Activated B cell treated with CpG ODN at 0.5 μM for 24 hours (primary cell): ENCODE measurements at regions of chr14 and their contacts with region 1.

Region 1: GRCh38 chr14:54773171-54773975 is 129.3 kb downstream of the GCH1 start:
- DNase-seq: no peak
- ATAC-seq: peak; percentile 32
- H3K4me3 Mint-ChIP-seq: peak overlapping the region; percentile 32
- H3K27ac Mint-ChIP-seq: peak overlapping the region; percentile 62
- H3K4me1 Mint-ChIP-seq: peaks cover 50% of the 10 kb centered on the region
- H3K27me3 Mint-ChIP-seq: no peaks in the 10 kb centered on the region
- CTCF ChIP-seq: no peak

Region 2: GRCh38 chr14:54366736-54367735 is 406.3 kb before region 1 on chr14:
- CTCF ChIA-PET with region 1: no interaction called
- POLR2A ChIA-PET with region 1: no interaction called
- intact Hi-C with region 1: loop called (anchors 5 kb)
- DNase-seq: no peak
- ATAC-seq: peak; percentile 65
- H3K4me3 Mint-ChIP-seq: no peak overlapping the region
- H3K27ac Mint-ChIP-seq: no peak overlapping the region
- H3K4me1 Mint-ChIP-seq: no peaks in the 10 kb centered on the region
- H3K27me3 Mint-ChIP-seq: peaks cover 15% of the 10 kb centered on the region
- CTCF ChIP-seq: no peak

Region 3: GRCh38 chr14:54509546-54510501 is 263.5 kb before region 1 on chr14 and contains the start of gene CGRRF1:
- CTCF ChIA-PET with region 1: interaction called, 13 read pairs
- POLR2A ChIA-PET with region 1: interaction called, 5 read pairs
- intact Hi-C with region 1: loop called (anchors 1 kb)
- DNase-seq: peak; percentile 98
- ATAC-seq: peak; percentile 98
- H3K4me3 Mint-ChIP-seq: peak within 1 kb of the TSS; percentile 95
- H3K27ac Mint-ChIP-seq: peak within 1 kb of the TSS; percentile 89
- H3K4me1 Mint-ChIP-seq: peaks cover 41% of the 10 kb centered on the region
- H3K27me3 Mint-ChIP-seq: no peaks in the 10 kb centered on the region
- CTCF ChIP-seq: no peak
- total RNA-seq, gene CGRRF1: 11.9 and 14.1 TPM in 2 replicates

Region 4: GRCh38 chr14:54642801-54643697 is 130.3 kb before region 1 on chr14:
- CTCF ChIA-PET with region 1: interaction called, 4 read pairs
- POLR2A ChIA-PET with region 1: no interaction called
- intact Hi-C with region 1: loop called (anchors 1 kb)
- DNase-seq: no peak
- ATAC-seq: no peak
- H3K4me3 Mint-ChIP-seq: no peak overlapping the region
- H3K27ac Mint-ChIP-seq: no peak overlapping the region
- H3K4me1 Mint-ChIP-seq: no peaks in the 10 kb centered on the region
- H3K27me3 Mint-ChIP-seq: no peaks in the 10 kb centered on the region
- CTCF ChIP-seq: no peak

Region 5: DNA sequence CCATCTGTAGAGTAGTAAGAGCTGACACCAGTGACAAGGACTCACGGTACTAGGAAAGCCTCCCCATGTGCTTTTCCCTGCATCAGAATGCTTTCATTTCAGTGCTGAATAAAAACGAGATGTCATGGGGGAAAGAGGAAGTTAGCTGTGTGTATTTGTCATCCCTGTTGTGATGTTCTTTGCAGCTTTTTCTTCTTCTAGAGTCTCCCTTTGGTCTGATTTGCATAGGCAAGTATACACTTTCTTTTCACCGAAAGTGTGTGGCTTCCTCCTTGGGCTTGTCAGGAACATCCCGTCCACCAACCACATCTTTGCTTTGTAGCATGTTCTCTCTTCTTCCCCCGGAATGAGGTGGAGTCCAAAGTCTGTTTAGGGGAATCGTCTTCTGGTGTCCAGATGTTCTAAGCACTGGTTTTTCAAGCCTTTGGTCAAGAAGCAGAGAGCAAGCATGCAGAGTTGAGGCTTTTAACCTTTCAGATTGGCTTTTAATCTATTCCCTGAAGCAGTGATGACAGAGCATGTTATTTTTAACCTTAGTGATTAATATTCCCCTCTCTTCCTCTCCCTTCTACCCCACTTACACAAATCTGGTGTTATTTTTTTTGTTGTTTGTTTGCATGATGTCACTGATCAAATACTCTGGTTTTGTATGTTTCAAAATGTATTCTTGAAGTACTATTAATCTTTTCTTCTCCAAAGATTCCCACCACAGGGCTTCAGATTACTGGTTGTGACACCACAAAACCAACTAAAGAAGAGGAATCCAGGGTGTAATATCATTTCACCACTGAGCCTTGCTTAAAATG is 43.0 kb before region 1 on chr14:
- CTCF ChIA-PET with region 1: interaction called, 7 read pairs
- POLR2A ChIA-PET with region 1: interaction called, 4 read pairs
- intact Hi-C with region 1: loop called (anchors 1 kb)
- DNase-seq: no peak
- ATAC-seq: peak; percentile 90
- H3K4me3 Mint-ChIP-seq: peak overlapping the region; percentile 78
- H3K27ac Mint-ChIP-seq: peak overlapping the region; percentile 88
- H3K4me1 Mint-ChIP-seq: peaks cover 22% of the 10 kb centered on the region
- H3K27me3 Mint-ChIP-seq: no peaks in the 10 kb centered on the region
- CTCF ChIP-seq: no peak

Region 6: GRCh38 chr14:54839701-54840119 is 66.3 kb after region 1 on chr14:
- CTCF ChIA-PET with region 1: no interaction called
- POLR2A ChIA-PET with region 1: interaction called, 12 read pairs
- intact Hi-C with region 1: no loop called
- DNase-seq: no peak
- ATAC-seq: no peak
- H3K4me3 Mint-ChIP-seq: no peak overlapping the region
- H3K27ac Mint-ChIP-seq: no peak overlapping the region
- H3K4me1 Mint-ChIP-seq: no peaks in the 10 kb centered on the region
- H3K27me3 Mint-ChIP-seq: no peaks in the 10 kb centered on the region
- CTCF ChIP-seq: no peak